ENCODE measurements at regions of chr5 and their contacts with region 1.

Region 1: DNA sequence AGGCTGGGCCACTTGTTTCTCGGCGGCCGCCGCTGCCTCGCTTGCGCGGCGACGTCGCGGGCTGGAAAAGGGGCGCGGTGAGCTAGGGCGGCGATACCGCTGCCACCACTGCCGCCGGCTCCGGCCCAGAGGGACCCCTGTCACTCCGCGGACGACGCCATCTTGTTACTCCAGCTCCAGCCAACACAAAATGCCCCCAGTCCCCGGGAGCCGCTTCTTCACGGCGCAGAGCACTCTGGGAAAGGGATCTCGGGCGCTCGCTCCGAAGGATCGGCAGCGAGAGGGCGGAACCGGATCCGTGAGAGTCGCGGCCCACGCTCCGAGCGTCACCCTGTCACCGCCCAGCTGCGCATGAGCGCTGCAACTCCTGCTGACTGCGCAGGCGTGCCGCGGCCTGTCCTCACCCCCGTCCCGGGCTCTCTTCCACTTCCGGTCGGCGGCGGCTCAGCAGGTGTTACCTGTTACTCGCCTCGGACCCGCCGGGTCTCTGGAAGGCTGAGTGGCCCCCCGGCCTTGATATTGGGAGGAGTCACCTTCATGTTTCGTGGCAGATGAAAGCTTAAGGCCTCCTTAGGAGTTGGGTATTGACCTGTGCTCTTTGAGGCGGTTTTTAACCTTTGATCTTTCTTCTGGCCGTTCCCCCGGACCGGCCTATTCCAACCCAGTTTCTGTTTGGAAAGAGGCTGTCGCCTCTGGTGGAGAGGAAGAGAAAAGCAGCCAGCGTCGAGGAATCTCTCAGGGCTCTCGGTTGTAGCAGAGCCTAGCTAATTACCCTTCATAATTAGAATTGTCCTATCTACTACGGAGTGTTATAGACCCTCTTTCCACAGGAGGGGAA is at the start of gene CSNK1A1:
- DNase-seq: peak; percentile 98
- ATAC-seq: peak; percentile 79
- H3K4me3 Mint-ChIP-seq: peak within 1 kb of the TSS; percentile 92
- H3K27ac Mint-ChIP-seq: peak within 1 kb of the TSS; percentile 96
- H3K4me1 Mint-ChIP-seq: peaks cover 36% of the 10 kb centered on the region
- H3K27me3 Mint-ChIP-seq: no peaks in the 10 kb centered on the region
- CTCF ChIP-seq: no peak
- total RNA-seq, gene CSNK1A1: 120 and 133 TPM in 2 replicates

Region 2: GRCh38 chr5:149345147-149345875 is 206.1 kb before region 1 on chr5 and contains the start of gene GRPEL2:
- CTCF ChIA-PET with region 1: no interaction called
- POLR2A ChIA-PET with region 1: interaction called, 29 read pairs
- intact Hi-C with region 1: loop called (anchors 1 kb)
- DNase-seq: peak; percentile 79
- ATAC-seq: peak; percentile 91
- H3K4me3 Mint-ChIP-seq: peak within 1 kb of the TSS; percentile 97
- H3K27ac Mint-ChIP-seq: peak within 1 kb of the TSS; percentile 97
- H3K4me1 Mint-ChIP-seq: peaks cover 34% of the 10 kb centered on the region
- H3K27me3 Mint-ChIP-seq: no peaks in the 10 kb centered on the region
- CTCF ChIP-seq: no peak
- total RNA-seq, gene GRPEL2: 13.2 and 14.0 TPM in 2 replicates

Region 3: GRCh38 chr5:149442563-149443182 is 108.7 kb before region 1 on chr5:
- CTCF ChIA-PET with region 1: interaction called, 4 read pairs
- POLR2A ChIA-PET with region 1: interaction called, 3 read pairs
- intact Hi-C with region 1: loop called (anchors 1 kb)
- DNase-seq: peak; percentile 59
- ATAC-seq: peak; percentile 71
- H3K4me3 Mint-ChIP-seq: no peak overlapping the region
- H3K27ac Mint-ChIP-seq: no peak overlapping the region
- H3K4me1 Mint-ChIP-seq: peaks cover 1% of the 10 kb centered on the region
- H3K27me3 Mint-ChIP-seq: peaks cover 11% of the 10 kb centered on the region
- CTCF ChIP-seq: peak; percentile 67

Region 4: DNA sequence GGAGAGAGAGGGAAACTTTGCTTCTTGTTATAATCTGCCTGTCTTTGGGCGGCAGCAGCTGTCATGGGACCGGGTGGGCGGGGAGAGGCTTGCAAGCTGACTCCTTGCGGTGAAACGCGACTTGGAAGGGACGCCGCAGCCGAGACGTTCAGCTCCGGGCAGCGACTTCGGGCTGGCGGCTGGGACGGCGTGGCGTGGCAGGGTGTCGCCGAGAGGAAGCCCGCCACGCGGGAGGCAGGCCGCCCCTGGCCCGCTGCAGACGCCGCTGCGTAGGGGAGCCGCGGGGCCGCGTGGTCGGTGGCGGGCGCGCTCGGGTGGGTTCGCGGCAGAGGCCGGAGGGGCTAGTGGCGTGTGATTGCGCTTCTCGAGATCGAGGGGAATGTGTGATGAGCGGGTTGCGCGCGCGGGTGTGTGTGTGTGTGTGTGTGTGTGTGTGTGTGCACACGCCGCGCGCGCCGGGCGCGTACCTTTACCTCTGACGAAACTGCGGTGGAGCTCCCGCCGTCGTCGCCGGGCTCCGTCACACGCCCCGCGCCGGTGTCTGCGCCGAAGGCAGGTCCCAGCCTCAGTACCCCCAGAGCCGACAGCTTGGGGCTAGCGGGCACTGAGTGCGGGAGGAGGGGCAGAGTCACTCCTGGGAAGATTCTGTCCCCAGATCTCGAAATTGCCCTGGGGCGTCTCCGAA is 180.4 kb after region 1 on chr5:
- CTCF ChIA-PET with region 1: no interaction called
- POLR2A ChIA-PET with region 1: interaction called, 4 read pairs
- intact Hi-C with region 1: loop called (anchors 1 kb)
- DNase-seq: peak; percentile 50
- ATAC-seq: peak; percentile 58
- H3K4me3 Mint-ChIP-seq: peak overlapping the region; percentile 88
- H3K27ac Mint-ChIP-seq: peak overlapping the region; percentile 75
- H3K4me1 Mint-ChIP-seq: peaks cover 12% of the 10 kb centered on the region
- H3K27me3 Mint-ChIP-seq: no peaks in the 10 kb centered on the region
- CTCF ChIP-seq: no peak